Left cardiac atrium (tissue), 4 donors: ENCODE measurements at regions of chr18 and their contacts with region 1.

Region 1: GRCh38 chr18:45670281-45670962 is 53.6 kb upstream of the SLC14A1 start:
- DNase-seq: peak; percentile 45
- ATAC-seq: peak; percentile 78 to 88

Region 2: DNA sequence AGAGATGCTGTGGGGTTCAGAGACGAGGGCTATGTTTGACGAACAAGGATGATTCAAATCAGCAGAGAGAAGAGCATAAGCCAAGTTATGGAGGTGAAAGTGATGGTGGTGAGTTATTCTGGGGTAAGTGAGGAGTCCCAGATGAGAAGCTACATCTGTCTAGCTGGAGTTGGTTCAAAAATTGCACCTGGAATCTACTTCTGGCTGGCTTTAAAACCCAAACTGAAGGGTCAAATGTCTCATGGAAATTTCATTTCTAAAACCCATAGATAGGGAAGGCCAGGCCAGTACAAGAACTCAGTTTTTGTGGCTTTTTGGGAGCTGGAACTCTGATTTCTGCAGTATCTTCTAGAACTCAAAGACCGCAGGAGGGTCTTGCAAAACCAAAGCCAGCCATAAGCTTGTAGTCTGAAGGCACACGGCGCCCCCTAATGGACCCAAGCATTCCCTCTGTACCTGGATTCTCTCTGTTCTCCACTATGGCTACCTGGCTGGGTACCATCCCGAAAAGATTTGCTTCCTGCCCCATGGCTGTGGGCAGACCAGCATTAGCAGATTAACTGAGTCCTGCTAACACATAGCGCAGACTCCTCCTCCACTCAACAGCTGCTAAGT is 284.3 kb before region 1 on chr18:
- intact Hi-C with region 1: no loop called
- DNase-seq: peak; percentile 31
- ATAC-seq: peak in 1 of 2 donors; percentile 35

Region 3: DNA sequence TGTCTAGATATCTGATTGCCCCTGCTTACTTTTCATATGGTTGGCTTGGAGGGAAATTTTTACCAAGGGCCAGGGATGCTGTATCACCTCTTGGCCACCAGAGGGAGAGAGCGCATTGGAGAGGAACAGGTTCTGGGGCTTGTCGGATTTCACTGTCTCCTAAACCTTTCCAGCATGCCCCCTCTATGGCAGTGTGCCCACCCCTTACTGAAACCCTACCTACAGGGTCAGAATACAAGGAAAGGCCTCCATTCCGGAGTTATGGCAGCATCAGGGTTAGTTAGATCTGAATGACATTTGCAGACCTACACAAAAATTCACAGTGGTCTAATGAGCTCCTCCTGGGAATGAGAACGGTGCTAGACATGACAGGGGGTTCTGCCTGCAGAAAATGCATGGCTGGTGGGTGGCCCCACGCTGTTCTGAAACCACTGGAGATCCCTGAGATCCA is 49.3 kb before region 1 on chr18:
- intact Hi-C with region 1: no loop called
- DNase-seq: peak; percentile 34
- ATAC-seq: peak in 1 of 2 donors; percentile 12

Region 4: DNA sequence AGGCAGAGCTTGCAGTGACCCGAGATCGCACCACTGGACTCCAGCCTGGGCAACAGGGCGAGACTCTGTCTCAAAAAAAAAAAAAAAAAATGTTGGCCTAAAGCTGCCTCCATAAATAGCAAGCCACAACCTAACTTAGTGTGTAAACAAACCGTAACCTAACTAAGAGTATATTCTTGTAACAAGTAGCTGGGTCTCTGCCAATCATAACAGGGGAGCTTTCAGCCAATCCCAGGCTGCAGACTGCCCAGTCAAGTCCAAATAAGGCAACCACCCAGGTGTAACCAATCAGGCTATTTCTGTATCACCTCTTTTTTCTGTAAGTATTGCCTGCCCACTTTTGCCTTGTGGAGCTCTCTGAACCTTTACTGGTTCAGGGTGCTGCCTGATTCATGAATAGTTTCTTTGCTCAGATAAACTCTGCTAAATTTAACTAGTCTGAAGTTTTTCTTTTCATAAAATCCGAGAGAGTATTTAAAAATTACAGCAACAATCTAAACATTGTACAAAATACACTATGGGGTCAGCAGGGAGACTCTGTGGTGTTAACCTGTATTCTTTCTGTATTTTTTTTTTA is 397.1 kb after region 1 on chr18:
- intact Hi-C with region 1: loop called in 1 of 2 experiments (anchors 10 kb)
- DNase-seq: no peak
- ATAC-seq: no peak